ENCODE measurements at regions of chr7 and their contacts with region 1.

Region 1: DNA sequence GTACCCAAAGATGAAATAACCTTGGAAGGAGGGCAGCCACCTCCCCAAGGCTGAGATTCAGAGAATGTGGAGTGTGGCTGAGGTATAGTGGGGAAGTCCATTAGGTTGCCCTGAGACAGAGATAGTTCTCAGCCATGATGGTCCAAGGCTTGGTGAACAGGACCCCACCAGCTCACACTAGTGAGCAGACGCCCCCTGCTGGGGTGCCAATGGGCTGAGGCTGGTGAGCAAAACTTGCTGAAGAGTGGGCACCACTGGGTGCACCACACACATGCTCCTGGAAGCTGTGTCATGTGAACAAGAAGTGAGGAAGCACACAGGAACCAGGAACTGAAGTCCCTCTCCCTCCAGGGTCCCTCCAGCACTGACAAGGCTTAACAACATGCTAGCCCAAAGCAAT is 8.9 kb downstream of the FBXL13 start:
- DNase-seq: peak; percentile 6
- H3K4me3 ChIP-seq: no peak overlapping the region
- H3K27ac ChIP-seq: no peak overlapping the region
- H3K4me1 ChIP-seq: no peaks in the 10 kb centered on the region
- H3K27me3 ChIP-seq: no peaks in the 10 kb centered on the region
- CTCF ChIP-seq: peak; percentile 38 to 53

Region 2: GRCh38 chr7:102874166-102874829 is 191.4 kb before region 1 on chr7:
- CTCF ChIA-PET with region 1: interaction called, 23 read pairs
- dilution Hi-C with region 1: no loop called
- in situ Hi-C with region 1: no loop called
- intact Hi-C with region 1: loop called (anchors 10 kb)
- DNase-seq: peak; percentile 82
- H3K4me3 ChIP-seq: no peak overlapping the region
- H3K27ac ChIP-seq: peak overlapping the region; percentile 93
- H3K4me1 ChIP-seq: peaks cover 52% of the 10 kb centered on the region
- H3K27me3 ChIP-seq: no peaks in the 10 kb centered on the region
- CTCF ChIP-seq: no peak

Region 3: DNA sequence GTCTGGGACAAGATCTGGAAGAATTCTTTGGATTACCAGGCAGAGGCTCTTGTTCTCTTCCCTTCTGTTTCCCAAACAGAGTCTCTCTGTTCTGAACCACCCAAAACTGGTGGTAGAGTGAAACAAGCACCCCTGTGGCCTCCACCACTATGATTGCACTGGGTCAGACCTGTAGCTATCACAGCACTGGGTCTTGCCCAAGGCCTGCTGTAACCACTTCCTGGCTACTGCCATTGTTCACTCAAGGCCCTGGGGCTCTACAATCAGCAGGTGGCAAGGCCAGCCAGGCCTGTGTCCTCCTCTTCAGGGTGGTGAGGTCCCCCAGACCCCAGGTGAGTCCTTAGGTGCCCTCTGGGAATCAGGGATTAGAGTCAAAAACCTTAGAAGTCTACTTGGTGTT is 157.0 kb before region 1 on chr7:
- CTCF ChIA-PET with region 1: no interaction called
- dilution Hi-C with region 1: no loop called
- in situ Hi-C with region 1: no loop called
- intact Hi-C with region 1: no loop called
- DNase-seq: no peak
- H3K4me3 ChIP-seq: no peak overlapping the region
- H3K27ac ChIP-seq: no peak overlapping the region
- H3K4me1 ChIP-seq: peaks cover 6% of the 10 kb centered on the region
- H3K27me3 ChIP-seq: no peaks in the 10 kb centered on the region
- CTCF ChIP-seq: no peak

Region 4: GRCh38 chr7:102918845-102919244 is 146.8 kb before region 1 on chr7:
- CTCF ChIA-PET with region 1: interaction called, 22 read pairs
- dilution Hi-C with region 1: no loop called
- in situ Hi-C with region 1: no loop called
- intact Hi-C with region 1: no loop called
- DNase-seq: no peak
- H3K4me3 ChIP-seq: no peak overlapping the region
- H3K27ac ChIP-seq: no peak overlapping the region
- H3K4me1 ChIP-seq: peaks cover 8% of the 10 kb centered on the region
- H3K27me3 ChIP-seq: no peaks in the 10 kb centered on the region
- CTCF ChIP-seq: no peak

Region 5: DNA sequence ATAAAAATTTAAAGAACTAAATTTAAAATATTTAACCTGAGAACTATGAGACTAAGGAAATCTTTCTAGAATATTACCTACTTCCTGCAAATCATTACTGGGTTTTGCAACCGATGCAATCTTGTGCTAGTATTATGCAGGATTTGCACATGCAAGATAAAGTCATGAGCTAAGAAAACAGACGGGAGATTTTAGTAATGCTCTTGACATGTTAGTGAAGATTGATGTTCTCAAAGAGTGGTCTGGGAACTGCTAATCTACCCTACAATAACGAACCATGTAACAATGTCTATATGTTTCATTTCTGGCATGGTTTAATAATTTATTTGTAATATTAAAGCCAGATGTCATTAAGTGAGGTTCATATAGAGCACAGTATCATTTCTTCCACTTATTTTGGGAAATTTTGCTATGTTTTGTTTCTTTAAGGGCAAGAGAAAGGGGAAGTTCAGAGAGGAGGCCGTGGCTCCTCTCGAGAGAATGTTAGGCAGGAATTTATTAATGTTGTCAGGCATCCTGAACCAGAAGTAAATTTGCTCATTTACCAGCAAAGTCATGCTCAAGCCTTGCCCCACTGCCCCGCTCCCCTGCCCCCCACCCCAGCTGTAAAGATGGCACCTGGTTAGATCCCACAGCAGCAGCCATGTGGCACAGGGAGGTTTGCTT is 130.1 kb before region 1 on chr7:
- CTCF ChIA-PET with region 1: interaction called, 19 read pairs
- dilution Hi-C with region 1: no loop called
- in situ Hi-C with region 1: no loop called
- intact Hi-C with region 1: no loop called
- DNase-seq: no peak
- H3K4me3 ChIP-seq: no peak overlapping the region
- H3K27ac ChIP-seq: no peak overlapping the region
- H3K4me1 ChIP-seq: no peaks in the 10 kb centered on the region
- H3K27me3 ChIP-seq: no peaks in the 10 kb centered on the region
- CTCF ChIP-seq: no peak

Region 6: GRCh38 chr7:103127006-103127405 is 61.3 kb after region 1 on chr7:
- CTCF ChIA-PET with region 1: interaction called, 29 read pairs
- dilution Hi-C with region 1: no loop called
- in situ Hi-C with region 1: no loop called
- intact Hi-C with region 1: no loop called
- DNase-seq: no peak
- H3K4me3 ChIP-seq: no peak overlapping the region
- H3K27ac ChIP-seq: no peak overlapping the region
- H3K4me1 ChIP-seq: no peaks in the 10 kb centered on the region
- H3K27me3 ChIP-seq: no peaks in the 10 kb centered on the region
- CTCF ChIP-seq: no peak